ENCODE measurements at regions of chr6 and their contacts with region 1.

Region 1: DNA sequence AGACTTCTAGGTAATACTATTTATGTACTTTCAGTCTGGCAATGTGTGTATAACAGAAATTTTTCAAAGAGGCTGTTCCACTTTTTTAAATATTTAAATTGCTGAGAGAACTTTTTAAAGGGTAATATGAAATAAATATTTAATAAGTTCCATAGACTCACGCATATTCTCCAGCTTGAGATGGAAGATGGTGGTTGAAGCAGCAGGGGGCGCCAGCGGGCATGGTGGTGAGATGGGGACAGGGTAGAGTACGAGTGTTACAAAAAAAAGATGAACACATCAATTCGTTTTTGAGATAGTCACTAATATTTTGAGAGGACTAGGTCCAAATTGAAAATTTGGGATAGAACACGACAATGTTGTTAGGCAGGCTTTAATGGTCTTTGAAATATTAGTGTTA is 68.4 kb downstream of the RSPO3 start:
- DNase-seq: peak; percentile 87
- ATAC-seq: peak; percentile 72
- H3K4me3 Mint-ChIP-seq: no peak overlapping the region
- H3K27ac Mint-ChIP-seq: no peak overlapping the region
- H3K4me1 Mint-ChIP-seq: no peaks in the 10 kb centered on the region
- H3K27me3 Mint-ChIP-seq: peaks cover 5% of the 10 kb centered on the region

Region 2: GRCh38 chr6:127279815-127280214 is 92.9 kb after region 1 on chr6:
- CTCF ChIA-PET with region 1: no interaction called
- POLR2A ChIA-PET with region 1: no interaction called
- intact Hi-C with region 1: no loop called
- DNase-seq: no peak
- ATAC-seq: no peak
- H3K4me3 Mint-ChIP-seq: no peak overlapping the region
- H3K27ac Mint-ChIP-seq: no peak overlapping the region
- H3K4me1 Mint-ChIP-seq: peaks cover 17% of the 10 kb centered on the region
- H3K27me3 Mint-ChIP-seq: no peaks in the 10 kb centered on the region

Region 3: GRCh38 chr6:127539272-127539671 is 352.4 kb after region 1 on chr6:
- CTCF ChIA-PET with region 1: interaction called, 23 read pairs
- POLR2A ChIA-PET with region 1: no interaction called
- intact Hi-C with region 1: loop called in 1 of 2 experiments (anchors 1 kb)
- DNase-seq: no peak
- ATAC-seq: peak; percentile 57
- H3K4me3 Mint-ChIP-seq: no peak overlapping the region
- H3K27ac Mint-ChIP-seq: no peak overlapping the region
- H3K4me1 Mint-ChIP-seq: peaks cover 2% of the 10 kb centered on the region
- H3K27me3 Mint-ChIP-seq: peaks cover 15% of the 10 kb centered on the region

Region 4: DNA sequence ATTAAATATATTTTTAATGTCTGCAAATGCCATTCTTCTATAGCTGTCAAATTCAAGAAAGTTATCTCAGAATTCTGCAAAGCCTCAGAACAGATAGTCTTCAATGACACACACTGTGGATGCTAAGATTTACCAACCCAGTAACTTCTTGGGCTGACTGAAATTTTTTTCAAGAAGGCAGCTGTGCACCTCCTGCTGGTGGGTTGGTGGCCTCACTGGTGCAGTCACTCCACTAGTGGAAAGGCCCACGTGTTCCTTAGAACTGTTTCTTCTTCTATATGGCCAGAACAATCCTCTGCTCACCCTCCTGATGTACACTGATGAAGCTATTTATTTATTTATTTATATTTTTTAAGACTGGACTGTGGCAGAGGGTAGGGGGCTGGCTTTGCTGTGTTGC is 360.3 kb after region 1 on chr6:
- CTCF ChIA-PET with region 1: interaction called, 3 read pairs
- POLR2A ChIA-PET with region 1: no interaction called
- intact Hi-C with region 1: loop called in 1 of 2 experiments (anchors 5 kb)
- DNase-seq: peak; percentile 54
- ATAC-seq: peak; percentile 49
- H3K4me3 Mint-ChIP-seq: no peak overlapping the region
- H3K27ac Mint-ChIP-seq: no peak overlapping the region
- H3K4me1 Mint-ChIP-seq: no peaks in the 10 kb centered on the region
- H3K27me3 Mint-ChIP-seq: peaks cover 19% of the 10 kb centered on the region

Measured in activated CD4-positive, alpha-beta T cell treated with anti-CD3 and anti-CD28 coated beads for 36 hours (primary cell).